ENCODE measurements at regions of chr6 and their contacts with region 1.

Region 1: DNA sequence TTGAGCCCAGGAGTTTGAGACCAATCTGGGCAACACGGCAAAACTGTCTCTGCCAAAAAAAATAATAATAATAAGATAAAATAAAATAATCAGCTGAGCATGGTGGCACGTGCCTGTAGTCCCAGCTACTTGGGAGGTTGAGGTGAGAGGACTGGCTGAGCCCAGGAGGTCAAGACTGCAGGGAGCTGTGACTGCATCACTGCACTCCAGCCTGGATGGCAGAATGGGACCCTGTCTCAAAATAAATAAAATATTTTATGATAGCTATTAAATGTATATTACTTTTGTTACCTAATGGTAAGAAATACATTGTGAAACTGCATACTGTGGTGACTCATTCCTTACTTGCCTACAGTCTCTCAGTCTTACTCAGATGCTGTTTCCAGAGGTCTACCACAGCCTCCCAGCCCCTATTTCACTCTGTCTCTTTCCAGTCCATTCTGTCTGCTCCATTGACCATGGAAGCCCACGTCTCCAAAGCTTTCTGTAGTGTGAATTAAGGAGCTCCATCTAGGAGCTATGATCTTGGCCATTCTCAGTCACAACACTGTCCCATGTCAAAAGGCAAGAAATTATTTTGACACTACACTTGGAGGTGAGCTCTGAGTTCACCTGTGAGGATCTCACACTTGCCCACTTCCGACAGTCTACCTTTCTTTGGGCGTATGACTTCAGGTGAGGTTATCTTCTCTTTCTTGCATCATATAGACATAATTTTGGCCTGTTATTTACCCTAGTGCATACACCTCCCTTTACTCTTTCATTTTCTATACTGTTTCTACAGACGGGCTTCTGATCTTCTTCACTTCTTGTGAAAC is 22.4 kb upstream of the SNX9 start:
- DNase-seq: peak; percentile 71
- H3K4me3 Mint-ChIP-seq: peak overlapping the region; percentile 30
- H3K27ac Mint-ChIP-seq: peak overlapping the region; percentile 72
- H3K4me1 Mint-ChIP-seq: peaks cover 60% of the 10 kb centered on the region
- H3K27me3 Mint-ChIP-seq: peaks cover 13% of the 10 kb centered on the region

Region 2: GRCh38 chr6:157486572-157486971 is 314.1 kb before region 1 on chr6:
- CTCF ChIA-PET with region 1: no interaction called
- POLR2A ChIA-PET with region 1: no interaction called
- intact Hi-C with region 1: no loop called
- DNase-seq: no peak
- H3K4me3 Mint-ChIP-seq: no peak overlapping the region
- H3K27ac Mint-ChIP-seq: no peak overlapping the region
- H3K4me1 Mint-ChIP-seq: peaks cover 12% of the 10 kb centered on the region
- H3K27me3 Mint-ChIP-seq: peaks cover 6% of the 10 kb centered on the region

Region 3: DNA sequence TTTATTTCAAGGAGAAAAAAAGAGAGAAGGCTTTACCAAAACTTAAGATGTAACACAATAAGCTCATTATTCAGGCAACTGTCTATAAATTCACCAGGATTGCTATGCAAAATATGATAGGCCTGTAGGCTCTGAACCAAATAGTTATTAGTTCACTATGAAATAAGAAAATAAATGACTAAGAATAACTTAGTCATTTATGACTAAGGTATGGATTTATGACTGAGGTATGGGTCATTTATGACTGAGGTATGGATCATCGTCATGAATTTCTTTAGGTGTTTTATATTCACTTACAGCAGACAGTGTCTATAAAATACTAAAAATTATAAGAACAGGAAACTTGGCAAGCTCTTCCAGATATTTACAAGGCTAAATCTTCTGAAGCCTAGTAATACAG is 29.7 kb before region 1 on chr6:
- CTCF ChIA-PET with region 1: interaction called, 5 read pairs
- POLR2A ChIA-PET with region 1: interaction called, 10 read pairs
- intact Hi-C with region 1: loop called (anchors 1 kb)
- DNase-seq: no peak
- H3K4me3 Mint-ChIP-seq: no peak overlapping the region
- H3K27ac Mint-ChIP-seq: no peak overlapping the region
- H3K4me1 Mint-ChIP-seq: peaks cover 43% of the 10 kb centered on the region
- H3K27me3 Mint-ChIP-seq: peaks cover 7% of the 10 kb centered on the region

Measured in activated CD4-positive, alpha-beta memory T cell treated with anti-CD3 and anti-CD28 coated beads for 36 hours (primary cell).